Gastrocnemius medialis (tissue), 4 donors: ENCODE measurements at regions of chr17 and their contacts with region 1.

Region 1: GRCh38 chr17:48131216-48131824 is 23.8 kb downstream of the SNX11 start:
- DNase-seq: peak; percentile 23 to 43
- ATAC-seq: peak; percentile 87 to 94
- H3K4me3 ChIP-seq: no peak overlapping the region
- H3K27ac ChIP-seq: no peak overlapping the region
- H3K4me1 ChIP-seq: no peaks in the 10 kb centered on the region
- H3K27me3 ChIP-seq: no peaks in the 10 kb centered on the region
- CTCF ChIP-seq: peak; percentile 68 to 83 (median 83)
- POLR2A ChIP-seq: no peak

Region 2: GRCh38 chr17:47831003-47831933 is 300.1 kb before region 1 on chr17 and contains the starts of genes LRRC46 and MRPL10:
- in situ Hi-C with region 1: loop called in 1 of 4 experiments (anchors 25 kb)
- intact Hi-C with region 1: no loop called
- DNase-seq: peak; percentile 83 to 88
- ATAC-seq: peak; percentile 91 to 94
- H3K4me3 ChIP-seq: peak within 1 kb of the TSS; percentile 77 to 92 (median 80)
- H3K27ac ChIP-seq: peak within 1 kb of the TSS; percentile 73 to 79 (median 76)
- H3K4me1 ChIP-seq: peaks cover 15 to 22% of the 10 kb centered on the region in 2 donors
- H3K27me3 ChIP-seq: no peaks in the 10 kb centered on the region
- CTCF ChIP-seq: peak in 3 of 5 experiments; percentile 12 to 28 (median 22)
- POLR2A ChIP-seq: peak; percentile 79 to 91
- total RNA-seq, gene LRRC46: 0.20 TPM in 1 of 4 donors, not detected in the others
- total RNA-seq, gene MRPL10: 38.6 to 76.5 (median 49.6) TPM

Region 3: DNA sequence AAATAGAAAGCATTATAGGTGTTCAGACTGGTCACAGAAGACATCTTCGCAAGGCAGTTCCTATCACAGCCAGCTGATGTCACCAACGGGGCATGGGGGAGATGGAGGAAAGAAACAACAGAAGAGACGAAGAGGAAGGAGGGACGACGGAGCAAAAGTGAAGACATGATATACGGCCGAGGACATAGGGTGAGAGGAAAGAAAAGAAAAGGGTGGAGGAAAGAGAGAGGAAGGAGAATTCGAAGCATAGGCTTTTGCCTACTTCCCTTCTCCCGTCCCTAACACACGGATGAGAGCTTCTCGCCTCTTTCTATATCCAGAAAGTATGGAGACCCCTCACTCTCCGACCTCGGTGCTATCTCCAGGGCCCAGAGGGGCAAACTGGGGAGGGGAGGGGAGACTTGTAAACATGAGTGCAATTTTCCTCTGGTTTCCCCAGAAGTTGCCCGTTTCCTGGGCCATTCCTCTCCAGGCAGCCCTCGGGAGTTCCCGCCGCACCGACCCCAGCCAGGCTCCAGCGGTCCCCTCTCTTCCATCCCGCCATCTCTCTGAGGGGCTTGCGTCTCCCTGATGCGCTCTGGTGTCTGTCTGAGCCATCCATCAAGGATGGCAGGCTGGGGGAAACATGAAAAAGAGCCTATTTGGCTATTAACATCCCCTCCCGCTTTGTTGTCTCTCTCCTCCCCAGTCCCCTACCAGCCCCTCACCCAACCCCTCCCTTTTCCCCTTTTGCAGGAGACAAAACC is 119.7 kb before region 1 on chr17:
- in situ Hi-C with region 1: loop called in 2 of 4 experiments (anchors 5 to 10 kb)
- intact Hi-C with region 1: no loop called
- DNase-seq: no peak
- ATAC-seq: no peak
- H3K4me3 ChIP-seq: peak overlapping the region in 3 of 4 donors; percentile 21 to 56 (median 37)
- H3K27ac ChIP-seq: no peak overlapping the region
- H3K4me1 ChIP-seq: peaks cover 6% of the 10 kb centered on the region in 2 donors
- H3K27me3 ChIP-seq: peaks cover 23 to 45% (median 39%) of the 10 kb centered on the region in 3 donors
- CTCF ChIP-seq: peak in 2 of 5 experiments; percentile 16 to 52
- POLR2A ChIP-seq: no peak

Region 4: DNA sequence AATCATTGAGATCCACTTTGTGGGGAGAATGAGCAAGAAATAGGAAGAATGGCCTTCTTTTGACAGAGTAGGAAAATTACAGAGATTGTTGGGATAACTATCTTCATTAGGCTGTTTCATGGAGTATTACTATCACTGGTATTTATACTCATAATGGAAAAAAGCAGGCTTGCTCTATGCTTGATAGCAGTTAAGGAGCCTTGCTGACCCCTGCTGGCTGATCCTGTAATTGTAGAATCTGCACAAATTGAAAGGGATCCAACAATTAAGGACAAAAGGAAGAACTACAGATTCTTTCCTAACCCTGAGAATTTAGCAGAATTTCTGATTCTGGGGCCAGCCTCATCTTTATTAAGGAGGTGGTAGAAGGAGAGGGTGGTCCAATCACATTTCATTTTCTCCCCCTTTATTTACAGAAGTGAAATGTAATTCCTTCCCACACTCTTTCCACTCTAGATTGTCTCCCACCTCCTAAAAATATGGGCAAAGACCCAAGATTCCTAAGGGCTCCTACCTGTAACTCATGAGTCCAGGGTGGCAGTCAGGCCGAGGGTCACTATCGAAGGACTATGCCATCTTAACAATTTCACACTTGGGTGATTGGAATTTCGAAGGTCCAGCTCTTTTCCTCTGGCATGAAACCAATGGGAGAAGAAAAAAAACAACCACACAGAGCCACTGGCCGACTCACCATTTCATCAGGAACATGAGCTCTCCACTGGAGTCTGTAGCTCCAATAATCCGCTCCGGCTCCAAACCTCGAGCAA is 56.8 kb before region 1 on chr17:
- in situ Hi-C with region 1: no loop called
- intact Hi-C with region 1: loop called (anchors 2 kb)
- DNase-seq: peak; percentile 56 to 79
- ATAC-seq: peak; percentile 68 to 80
- H3K4me3 ChIP-seq: no peak overlapping the region
- H3K27ac ChIP-seq: peak overlapping the region; percentile 68 to 97 (median 82)
- H3K4me1 ChIP-seq: peaks cover 6 to 14% of the 10 kb centered on the region in 2 donors
- H3K27me3 ChIP-seq: no peaks in the 10 kb centered on the region
- CTCF ChIP-seq: peak; percentile 83 to 97 (median 86)
- POLR2A ChIP-seq: no peak

Region 5: DNA sequence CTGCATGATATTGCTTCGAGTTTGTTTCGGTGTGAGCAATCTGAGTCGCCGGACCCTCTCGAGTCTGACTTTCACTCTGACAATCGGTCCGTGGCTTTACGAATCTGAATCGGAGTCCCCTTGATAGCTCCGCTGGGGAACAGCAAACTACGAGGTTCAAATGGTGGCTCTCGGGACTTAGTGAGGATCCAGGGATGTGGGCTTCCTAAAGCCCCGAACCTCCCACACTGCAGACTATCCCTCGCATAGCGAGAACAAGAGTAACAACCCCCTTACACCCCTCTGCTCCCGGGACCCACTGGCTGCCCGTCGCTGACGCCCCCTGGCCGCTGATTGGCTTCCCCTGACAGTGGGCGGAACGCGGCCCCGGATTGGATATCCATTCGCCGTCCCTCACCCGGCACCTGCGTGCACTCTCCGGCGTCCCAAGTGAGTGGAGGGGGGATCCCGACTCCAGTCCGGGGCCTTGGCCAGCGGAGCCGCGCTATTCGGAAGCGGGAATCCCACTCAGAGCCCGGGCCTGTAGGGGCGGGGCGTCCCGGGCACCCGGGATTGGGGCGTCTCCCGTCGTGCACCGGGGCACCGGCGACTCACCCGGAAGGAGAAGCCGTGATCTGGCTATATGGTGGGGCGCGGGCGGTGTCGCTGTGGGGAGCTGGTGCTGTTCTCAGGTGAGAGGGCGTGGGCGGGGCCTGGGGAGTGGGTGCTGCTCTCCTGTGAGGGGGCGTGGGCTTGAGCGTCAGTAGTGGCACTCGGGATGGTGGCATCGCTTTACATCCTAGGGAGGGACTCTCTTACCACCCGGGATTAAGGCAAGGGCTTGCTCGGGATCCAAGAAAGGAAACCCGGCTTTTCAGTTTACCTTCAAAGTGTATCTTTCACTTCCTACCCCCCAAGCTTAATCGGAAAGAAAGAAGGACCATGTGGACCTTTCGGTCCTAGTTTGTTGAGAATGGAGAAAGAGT is 23.9 kb before region 1 on chr17 and contains the start of gene SNX11:
- in situ Hi-C with region 1: no loop called
- intact Hi-C with region 1: loop called (anchors 2 kb)
- DNase-seq: peak; percentile 81 to 87
- ATAC-seq: peak; percentile 95 to 97
- H3K4me3 ChIP-seq: peak within 1 kb of the TSS; percentile 64 to 99 (median 94)
- H3K27ac ChIP-seq: peak within 1 kb of the TSS; percentile 92 to 100 (median 98)
- H3K4me1 ChIP-seq: peaks cover 14 to 18% of the 10 kb centered on the region in 2 donors
- H3K27me3 ChIP-seq: no peaks in the 10 kb centered on the region
- CTCF ChIP-seq: peak in 2 of 5 experiments; percentile 8 to 22
- POLR2A ChIP-seq: peak; percentile 67 to 70
- total RNA-seq, gene SNX11: 7.3 to 16.3 (median 9.6) TPM

Region 6: GRCh38 chr17:48228721-48229120 is 97.4 kb after region 1 on chr17:
- in situ Hi-C with region 1: no loop called
- intact Hi-C with region 1: no loop called
- DNase-seq: no peak
- ATAC-seq: no peak
- H3K4me3 ChIP-seq: no peak overlapping the region
- H3K27ac ChIP-seq: no peak overlapping the region
- H3K4me1 ChIP-seq: peaks cover 0 to 4% of the 10 kb centered on the region in 2 donors
- H3K27me3 ChIP-seq: peaks cover 2 to 9% (median 6%) of the 10 kb centered on the region in 3 donors
- CTCF ChIP-seq: no peak
- POLR2A ChIP-seq: no peak